Mammary epithelial cell (primary cell): ENCODE measurements at regions of chr6 and their contacts with region 1.

Region 1: DNA sequence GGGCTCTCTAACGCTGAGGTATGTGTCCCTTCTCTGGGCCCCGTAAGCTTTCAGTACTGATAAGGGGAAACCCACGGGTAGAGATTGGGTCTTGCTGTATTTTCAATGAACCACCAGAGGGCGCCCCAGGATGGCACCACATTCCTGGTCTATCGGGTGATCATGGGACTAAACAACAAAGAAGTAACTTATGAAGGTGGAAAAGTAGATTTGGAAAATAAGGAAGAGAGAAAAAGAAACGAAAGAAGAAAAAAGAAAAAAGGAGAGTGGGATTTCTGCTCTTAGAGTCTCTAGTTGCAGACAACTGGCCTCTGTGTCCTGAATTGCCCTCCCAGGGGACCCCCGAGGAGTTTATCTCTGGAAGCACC is 93.8 kb downstream of the GMPR start:
- DNase-seq: peak; percentile 53
- H3K4me3 ChIP-seq: no peak overlapping the region
- H3K27ac ChIP-seq: no peak overlapping the region
- H3K4me1 ChIP-seq: peaks cover 52% of the 10 kb centered on the region
- H3K27me3 ChIP-seq: no peaks in the 10 kb centered on the region
- CTCF ChIP-seq: peak; percentile 80 to 95

Region 2: DNA sequence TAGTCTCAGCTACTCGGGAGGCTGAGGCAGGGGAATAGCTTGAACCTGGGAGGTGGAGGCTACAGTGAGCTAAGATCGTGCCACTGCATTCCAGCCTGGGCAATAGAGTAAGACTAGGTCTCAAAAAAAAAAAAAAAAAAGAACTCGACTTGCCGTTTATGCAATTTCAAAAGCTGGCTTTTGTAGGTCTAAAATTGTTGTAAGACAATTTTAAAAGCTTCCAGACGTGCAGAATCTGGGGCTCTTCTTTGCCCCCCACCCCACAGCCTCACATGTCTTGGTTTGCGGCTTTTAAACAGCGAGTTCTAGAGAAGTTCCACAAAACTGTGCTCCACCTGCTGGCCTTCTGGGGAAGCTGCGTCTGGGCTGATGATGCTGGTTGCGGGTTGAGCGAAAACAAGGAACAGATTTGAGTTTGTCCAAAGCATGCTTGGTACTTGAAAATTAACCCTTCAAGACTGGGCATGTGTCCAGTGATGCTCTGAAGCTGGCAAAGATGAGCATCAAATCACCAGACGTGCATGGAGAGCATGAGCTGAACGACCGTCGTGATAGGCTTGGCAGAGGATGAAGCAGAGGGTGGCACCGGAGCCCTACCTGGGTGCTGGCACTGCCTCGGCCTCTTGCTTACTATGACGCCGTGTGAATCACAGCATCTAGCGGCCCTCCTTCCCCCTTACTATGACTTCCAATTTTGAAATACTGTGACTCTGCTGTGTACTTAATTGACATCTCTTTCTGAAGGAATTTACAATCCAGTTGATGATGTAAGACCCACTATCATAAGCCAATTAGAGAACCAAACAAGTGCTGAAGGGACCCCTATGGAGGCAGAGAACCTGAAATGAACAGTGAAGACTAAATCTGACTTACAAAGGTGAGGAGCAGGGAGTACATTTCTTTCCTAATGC is 77.6 kb after region 1 on chr6:
- CTCF ChIA-PET with region 1: interaction called, 4 read pairs
- dilution Hi-C with region 1: no loop called
- in situ Hi-C with region 1: no loop called
- intact Hi-C with region 1: loop called (anchors 1 kb)
- DNase-seq: peak; percentile 62
- H3K4me3 ChIP-seq: no peak overlapping the region
- H3K27ac ChIP-seq: no peak overlapping the region
- H3K4me1 ChIP-seq: no peaks in the 10 kb centered on the region
- H3K27me3 ChIP-seq: no peaks in the 10 kb centered on the region
- CTCF ChIP-seq: peak; percentile 67

Region 3: GRCh38 chr6:16450285-16450684 is 118.1 kb after region 1 on chr6:
- CTCF ChIA-PET with region 1: no interaction called
- dilution Hi-C with region 1: no loop called
- in situ Hi-C with region 1: no loop called
- intact Hi-C with region 1: no loop called
- DNase-seq: no peak
- H3K4me3 ChIP-seq: no peak overlapping the region
- H3K27ac ChIP-seq: no peak overlapping the region
- H3K4me1 ChIP-seq: no peaks in the 10 kb centered on the region
- H3K27me3 ChIP-seq: no peaks in the 10 kb centered on the region
- CTCF ChIP-seq: no peak

Region 4: GRCh38 chr6:16514249-16514648 is 182.1 kb after region 1 on chr6:
- CTCF ChIA-PET with region 1: no interaction called
- dilution Hi-C with region 1: no loop called
- in situ Hi-C with region 1: no loop called
- intact Hi-C with region 1: loop called (anchors 1 kb)
- DNase-seq: peak; percentile 18
- H3K4me3 ChIP-seq: no peak overlapping the region
- H3K27ac ChIP-seq: no peak overlapping the region
- H3K4me1 ChIP-seq: peaks cover 7% of the 10 kb centered on the region
- H3K27me3 ChIP-seq: no peaks in the 10 kb centered on the region
- CTCF ChIP-seq: peak; percentile 44 to 58

Region 5: DNA sequence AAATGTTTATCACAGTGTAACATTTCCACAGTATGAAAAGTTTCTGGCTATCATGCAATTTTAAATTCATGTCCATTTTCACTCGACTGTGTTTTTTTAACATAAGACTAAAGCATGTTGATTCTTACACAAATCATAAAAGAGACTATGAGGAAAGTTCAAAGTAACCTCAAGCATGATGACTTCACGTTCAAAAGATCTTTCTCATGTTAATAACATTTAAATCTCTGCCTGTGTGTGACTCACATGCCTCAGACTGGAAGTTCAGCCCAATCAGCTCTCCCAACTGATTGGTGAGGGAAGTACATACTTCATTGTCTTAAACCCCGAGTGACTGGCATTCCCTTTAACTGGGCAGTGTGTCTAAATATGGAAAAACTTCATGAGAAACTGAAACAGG is 391.7 kb after region 1 on chr6:
- CTCF ChIA-PET with region 1: no interaction called
- dilution Hi-C with region 1: no loop called
- in situ Hi-C with region 1: loop called in 1 of 2 experiments (anchors 10 kb)
- intact Hi-C with region 1: no loop called
- DNase-seq: peak; percentile 92
- H3K4me3 ChIP-seq: no peak overlapping the region
- H3K27ac ChIP-seq: peak overlapping the region; percentile 85
- H3K4me1 ChIP-seq: peaks cover 61% of the 10 kb centered on the region
- H3K27me3 ChIP-seq: no peaks in the 10 kb centered on the region
- CTCF ChIP-seq: no peak

Region 6: GRCh38 chr6:16964553-16965501 is 632.7 kb after region 1 on chr6:
- CTCF ChIA-PET with region 1: no interaction called
- dilution Hi-C with region 1: no loop called
- in situ Hi-C with region 1: loop called in 1 of 2 experiments (anchors 25 kb)
- intact Hi-C with region 1: loop called (anchors 1 kb)
- DNase-seq: peak; percentile 45
- H3K4me3 ChIP-seq: no peak overlapping the region
- H3K27ac ChIP-seq: no peak overlapping the region
- H3K4me1 ChIP-seq: no peaks in the 10 kb centered on the region
- H3K27me3 ChIP-seq: peaks cover 2% of the 10 kb centered on the region
- CTCF ChIP-seq: peak; percentile 96 to 97